ENCODE measurements at regions of chr20 and their contacts with region 1.

Region 1: GRCh38 chr20:32509639-32510066 is 75.5 kb downstream of the NOL4L start:
- DNase-seq: peak; percentile 46 to 90 (median 81)
- ATAC-seq: peak; percentile 78
- H3K4me3 ChIP-seq: peak overlapping the region; percentile 51 to 77
- H3K4me3 Mint-ChIP-seq: peak overlapping the region; percentile 88
- H3K27ac ChIP-seq: peak overlapping the region; percentile 69 to 72
- H3K27ac Mint-ChIP-seq: peak overlapping the region; percentile 97
- H3K4me1 ChIP-seq: peaks cover 70% of the 10 kb centered on the region
- H3K4me1 Mint-ChIP-seq: peaks cover 77% of the 10 kb centered on the region
- H3K27me3 ChIP-seq: no peaks in the 10 kb centered on the region
- H3K27me3 Mint-ChIP-seq: no peaks in the 10 kb centered on the region
- CTCF ChIP-seq: no peak

Region 2: DNA sequence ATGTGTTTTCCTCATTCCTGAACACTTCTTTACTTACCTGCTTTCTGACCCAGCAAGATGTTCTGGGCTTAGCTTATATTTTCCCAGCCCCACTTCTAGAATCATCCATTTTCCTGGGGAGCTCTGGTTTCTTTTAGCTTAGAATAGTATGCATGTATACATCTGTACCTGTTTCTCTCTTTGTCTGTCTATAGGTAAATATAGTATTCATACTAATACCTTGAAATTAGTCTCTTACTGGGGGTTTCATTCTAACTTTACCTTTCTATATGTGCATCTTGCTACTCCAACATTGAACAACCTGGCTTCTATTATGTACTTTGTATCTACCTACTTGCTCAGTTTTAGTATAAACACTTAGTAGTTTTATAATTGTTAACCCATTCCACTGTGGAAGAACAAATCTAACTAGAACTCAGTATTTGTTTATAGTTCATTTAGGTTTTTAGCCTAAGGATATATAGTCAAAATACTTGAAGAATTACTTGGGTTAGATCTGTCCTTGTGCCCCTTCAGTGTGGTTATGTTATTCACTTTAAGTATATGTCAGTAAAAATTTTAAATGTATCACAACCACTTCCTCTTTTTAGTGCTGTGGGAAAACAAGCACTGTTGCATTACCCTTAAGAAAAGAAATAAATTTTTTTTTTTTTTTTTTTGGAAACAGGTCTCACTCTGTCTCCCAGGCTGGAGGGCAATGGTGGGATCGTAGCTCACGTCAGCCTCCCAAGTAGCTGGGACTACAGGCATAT is 97.5 kb before region 1 on chr20:
- CTCF ChIA-PET with region 1: no interaction called
- POLR2A ChIA-PET with region 1: no interaction called
- intact Hi-C with region 1: no loop called
- DNase-seq: no peak
- ATAC-seq: no peak
- H3K4me3 ChIP-seq: no peak overlapping the region
- H3K4me3 Mint-ChIP-seq: no peak overlapping the region
- H3K27ac ChIP-seq: no peak overlapping the region
- H3K27ac Mint-ChIP-seq: peak overlapping the region; percentile 3
- H3K4me1 ChIP-seq: peaks cover 60% of the 10 kb centered on the region
- H3K4me1 Mint-ChIP-seq: peaks cover 73% of the 10 kb centered on the region
- H3K27me3 ChIP-seq: no peaks in the 10 kb centered on the region
- H3K27me3 Mint-ChIP-seq: no peaks in the 10 kb centered on the region
- CTCF ChIP-seq: no peak

Region 3: GRCh38 chr20:32451682-32452462 is 57.8 kb before region 1 on chr20:
- CTCF ChIA-PET with region 1: no interaction called
- POLR2A ChIA-PET with region 1: no interaction called
- intact Hi-C with region 1: loop called in 1 of 2 experiments (anchors 2 kb)
- DNase-seq: no peak
- ATAC-seq: no peak
- H3K4me3 ChIP-seq: no peak overlapping the region
- H3K4me3 Mint-ChIP-seq: no peak overlapping the region
- H3K27ac ChIP-seq: no peak overlapping the region
- H3K27ac Mint-ChIP-seq: peak overlapping the region; percentile 84
- H3K4me1 ChIP-seq: peaks cover under 1% of the 10 kb centered on the region
- H3K4me1 Mint-ChIP-seq: peaks cover 10% of the 10 kb centered on the region
- H3K27me3 ChIP-seq: no peaks in the 10 kb centered on the region
- H3K27me3 Mint-ChIP-seq: no peaks in the 10 kb centered on the region
- CTCF ChIP-seq: no peak

Region 4: GRCh38 chr20:32521780-32522525 is 12.3 kb after region 1 on chr20:
- CTCF ChIA-PET with region 1: interaction called, 62 read pairs
- POLR2A ChIA-PET with region 1: interaction called, 15 read pairs
- intact Hi-C with region 1: no loop called
- DNase-seq: peak in 8 of 9 experiments; percentile 55 to 83 (median 74)
- ATAC-seq: peak; percentile 78
- H3K4me3 ChIP-seq: no peak overlapping the region
- H3K4me3 Mint-ChIP-seq: peak overlapping the region; percentile 54
- H3K27ac ChIP-seq: peak overlapping the region in 1 of 2 experiments; percentile 52
- H3K27ac Mint-ChIP-seq: peak overlapping the region; percentile 92
- H3K4me1 ChIP-seq: peaks cover 66% of the 10 kb centered on the region
- H3K4me1 Mint-ChIP-seq: peaks cover 66% of the 10 kb centered on the region
- H3K27me3 ChIP-seq: no peaks in the 10 kb centered on the region
- H3K27me3 Mint-ChIP-seq: no peaks in the 10 kb centered on the region
- CTCF ChIP-seq: peak; percentile 79

Region 5: GRCh38 chr20:32528171-32528891 is 18.7 kb after region 1 on chr20:
- CTCF ChIA-PET with region 1: interaction called, 62 read pairs
- POLR2A ChIA-PET with region 1: interaction called, 15 read pairs
- intact Hi-C with region 1: no loop called
- DNase-seq: peak in 5 of 9 experiments; percentile 33 to 64 (median 42)
- ATAC-seq: peak; percentile 61
- H3K4me3 ChIP-seq: peak overlapping the region in 1 of 2 experiments; percentile 11
- H3K4me3 Mint-ChIP-seq: peak overlapping the region; percentile 62
- H3K27ac ChIP-seq: peak overlapping the region; percentile 32 to 69
- H3K27ac Mint-ChIP-seq: peak overlapping the region; percentile 94
- H3K4me1 ChIP-seq: peaks cover 83% of the 10 kb centered on the region
- H3K4me1 Mint-ChIP-seq: peaks cover 91% of the 10 kb centered on the region
- H3K27me3 ChIP-seq: no peaks in the 10 kb centered on the region
- H3K27me3 Mint-ChIP-seq: no peaks in the 10 kb centered on the region
- CTCF ChIP-seq: no peak

Measured in CD8-positive, alpha-beta T cell (primary cell).